Activated CD8-positive, alpha-beta memory T cell treated with anti-CD3 and anti-CD28 coated beads, Interleukin-2, amount 10 ng/mL, durations not matched to agents 7 days and 5 days (primary cell): ENCODE measurements at regions of chr4 and their contacts with region 1.

Region 1: DNA sequence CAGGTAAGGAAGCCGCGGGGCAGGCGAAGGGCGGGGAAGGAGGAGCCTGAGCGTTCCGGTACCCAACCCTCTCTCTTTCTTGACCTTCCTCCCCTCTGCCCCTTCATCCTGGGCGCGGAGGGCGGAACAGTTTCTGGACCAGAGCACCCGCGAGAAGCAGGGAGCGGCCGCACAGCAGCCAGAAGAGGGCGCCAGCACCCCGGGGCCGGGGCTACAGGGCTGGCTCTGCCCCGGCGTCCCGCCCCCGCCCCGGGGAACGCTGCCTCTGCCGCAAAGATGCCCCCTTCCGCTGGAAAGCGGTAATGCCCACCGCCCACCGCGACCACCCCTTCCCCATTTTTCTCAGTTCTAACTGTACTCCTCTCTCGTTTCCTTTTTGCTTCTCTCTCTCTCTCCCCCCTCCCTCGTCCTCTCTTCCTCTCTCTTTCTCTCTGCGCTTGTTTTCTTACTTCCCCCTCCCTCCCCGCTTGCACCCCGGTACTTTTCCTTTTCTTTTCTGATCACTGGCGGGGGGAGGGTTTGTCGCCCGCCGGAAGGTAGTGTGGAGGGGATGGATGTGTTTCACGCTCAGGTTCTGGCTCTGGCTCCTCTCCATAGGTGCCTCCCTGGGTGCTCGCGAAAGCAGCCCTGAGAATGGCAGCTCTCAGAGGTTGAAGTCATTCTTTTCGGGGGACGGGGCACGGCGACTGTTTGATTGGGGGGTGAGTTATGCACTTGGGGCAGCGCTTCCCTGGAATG is 13.1 kb upstream of the PRDM8 start:
- DNase-seq: peak; percentile 96
- ATAC-seq: peak; percentile 92
- H3K4me3 Mint-ChIP-seq: peak overlapping the region; percentile 96
- H3K27ac Mint-ChIP-seq: peak overlapping the region; percentile 87
- H3K4me1 Mint-ChIP-seq: peaks cover 60% of the 10 kb centered on the region
- H3K27me3 Mint-ChIP-seq: peaks cover 12% of the 10 kb centered on the region

Region 2: DNA sequence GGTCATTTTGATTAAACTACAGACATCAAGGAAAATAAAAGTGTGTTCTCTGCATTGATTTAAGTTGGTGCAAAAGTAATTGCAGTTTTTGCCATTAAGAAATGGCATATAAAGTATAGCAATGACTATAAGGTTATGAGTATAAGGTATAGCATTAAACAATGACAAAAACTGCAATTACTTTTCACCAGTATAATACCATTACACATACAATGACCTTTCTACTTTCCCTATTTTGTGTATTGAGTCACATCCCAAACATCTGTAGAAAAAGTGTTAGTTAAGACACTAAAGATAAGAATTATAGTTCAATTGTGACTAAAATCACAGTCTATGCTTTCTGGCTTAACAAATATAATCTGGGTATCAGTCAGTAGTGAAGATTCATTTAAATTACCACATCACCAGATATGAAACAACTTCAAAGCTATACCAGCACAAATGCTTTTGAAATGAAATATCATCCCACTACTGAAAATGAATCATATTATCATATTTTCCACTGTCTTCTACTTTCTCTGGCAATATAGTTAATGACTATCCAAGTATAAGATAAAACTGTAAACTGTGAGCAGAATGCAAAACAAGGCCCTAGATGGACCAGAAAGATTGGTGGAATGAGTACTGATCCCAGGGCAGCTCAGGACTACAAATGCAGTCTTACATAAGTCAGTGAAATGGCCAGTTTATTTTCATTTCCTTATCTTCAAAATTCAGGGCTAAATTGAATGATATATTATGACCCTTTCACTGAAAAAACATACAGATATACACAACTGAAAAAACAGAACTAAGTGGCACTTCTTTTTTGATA is 352.3 kb before region 1 on chr4:
- CTCF ChIA-PET with region 1: no interaction called
- DNase-seq: no peak
- ATAC-seq: no peak
- H3K4me3 Mint-ChIP-seq: no peak overlapping the region
- H3K27ac Mint-ChIP-seq: no peak overlapping the region
- H3K4me1 Mint-ChIP-seq: no peaks in the 10 kb centered on the region
- H3K27me3 Mint-ChIP-seq: peaks cover 9% of the 10 kb centered on the region

Region 3: DNA sequence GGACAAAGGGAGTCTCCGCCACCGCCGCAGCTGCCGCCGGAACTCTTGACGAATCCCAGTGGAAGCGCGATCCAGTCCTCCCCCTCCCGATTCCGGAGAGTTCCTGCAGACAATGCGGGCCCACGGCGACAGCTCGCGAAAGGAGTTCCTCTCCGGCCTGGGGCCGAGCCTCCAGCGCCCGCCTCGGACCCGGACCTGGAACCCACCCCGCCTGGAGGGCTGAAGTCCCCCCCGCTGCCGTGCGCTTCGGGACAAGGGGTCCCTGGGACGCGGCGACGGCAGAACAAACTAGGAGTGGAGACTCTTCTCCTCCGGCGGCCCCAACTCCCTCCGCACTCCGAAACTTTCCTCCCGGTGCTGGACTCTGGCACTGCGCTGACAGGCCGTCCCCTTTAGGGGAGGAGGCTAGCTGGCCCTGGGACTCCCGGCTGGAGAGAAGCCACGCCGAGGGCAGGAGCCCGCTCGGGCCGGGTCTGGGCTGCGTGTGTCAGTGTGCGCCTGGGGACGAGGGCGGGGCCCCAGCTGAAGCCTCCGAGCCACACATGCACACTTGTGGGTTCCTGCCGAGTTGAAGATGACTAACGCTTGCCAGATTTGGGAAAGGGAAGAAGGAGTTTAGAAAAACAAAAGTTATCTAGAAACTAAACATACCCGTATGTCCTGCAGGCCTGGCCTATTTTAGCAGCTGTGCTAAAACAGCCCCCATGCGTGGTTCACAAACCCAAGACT is 111.3 kb before region 1 on chr4 and contains the start of gene ANTXR2:
- CTCF ChIA-PET with region 1: interaction called, 40 read pairs
- DNase-seq: peak; percentile 88
- ATAC-seq: peak; percentile 87
- H3K4me3 Mint-ChIP-seq: peak within 1 kb of the TSS; percentile 95
- H3K27ac Mint-ChIP-seq: peak within 1 kb of the TSS; percentile 89
- H3K4me1 Mint-ChIP-seq: peaks cover 72% of the 10 kb centered on the region
- H3K27me3 Mint-ChIP-seq: no peaks in the 10 kb centered on the region
- total RNA-seq, gene ANTXR2: 52.0 to 55.0 TPM

Region 4: GRCh38 chr4:80138551-80139538 is 45.4 kb before region 1 on chr4:
- CTCF ChIA-PET with region 1: interaction called, 45 read pairs
- DNase-seq: peak; percentile 88
- ATAC-seq: peak; percentile 95
- H3K4me3 Mint-ChIP-seq: peak overlapping the region; percentile 33
- H3K27ac Mint-ChIP-seq: peak overlapping the region; percentile 87
- H3K4me1 Mint-ChIP-seq: peaks cover 60% of the 10 kb centered on the region
- H3K27me3 Mint-ChIP-seq: no peaks in the 10 kb centered on the region

Region 5: DNA sequence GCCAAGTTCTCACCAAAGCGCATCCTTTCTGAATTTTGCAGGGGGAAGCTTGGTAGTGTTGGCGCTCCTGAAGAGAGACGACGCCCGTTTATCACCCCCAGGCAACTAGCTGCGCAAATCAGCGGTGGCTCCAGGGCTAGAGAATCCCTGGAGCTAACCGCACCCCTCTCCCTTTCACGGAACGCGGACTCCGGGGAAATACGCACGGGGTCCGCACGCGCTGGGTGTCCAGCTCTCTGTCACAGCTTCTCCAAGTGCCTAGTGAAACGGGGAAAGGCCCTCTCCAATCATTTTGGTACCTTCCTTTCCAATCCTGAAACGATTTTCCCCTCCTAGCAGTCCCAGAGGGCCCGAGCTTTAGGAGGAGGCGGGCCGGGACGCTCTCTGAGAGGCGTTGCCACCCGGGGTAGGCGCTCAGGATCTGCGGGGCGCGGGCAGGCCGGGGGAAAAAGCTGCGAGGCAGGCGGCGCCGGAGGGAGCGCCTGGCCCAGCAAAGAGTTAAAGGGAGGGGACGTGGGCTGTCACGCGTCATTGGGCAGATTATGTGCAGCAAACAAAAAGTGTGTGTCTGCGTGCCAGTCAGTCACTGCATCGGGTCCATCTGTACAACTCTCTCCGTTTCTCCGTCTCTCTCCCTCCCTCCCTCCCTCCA is 12.8 kb after region 1 on chr4 and contains the start of gene PRDM8:
- CTCF ChIA-PET with region 1: interaction called, 125 read pairs
- DNase-seq: no peak
- ATAC-seq: no peak
- H3K4me3 Mint-ChIP-seq: peak within 1 kb of the TSS; percentile 53
- H3K27ac Mint-ChIP-seq: no peak within 1 kb of the TSS
- H3K4me1 Mint-ChIP-seq: peaks cover 37% of the 10 kb centered on the region
- H3K27me3 Mint-ChIP-seq: peaks cover 33% of the 10 kb centered on the region
- total RNA-seq, gene PRDM8: 21.7 to 32.5 TPM

Region 6: GRCh38 chr4:80213117-80213815 is 29.0 kb after region 1 on chr4:
- CTCF ChIA-PET with region 1: interaction called, 10 read pairs
- DNase-seq: no peak
- ATAC-seq: no peak
- H3K4me3 Mint-ChIP-seq: no peak overlapping the region
- H3K27ac Mint-ChIP-seq: no peak overlapping the region
- H3K4me1 Mint-ChIP-seq: peaks cover 1% of the 10 kb centered on the region
- H3K27me3 Mint-ChIP-seq: peaks cover 30% of the 10 kb centered on the region